Posterior vena cava (tissue), 2 donors: ENCODE measurements at regions of chr10 and their contacts with region 1.

Region 1: DNA sequence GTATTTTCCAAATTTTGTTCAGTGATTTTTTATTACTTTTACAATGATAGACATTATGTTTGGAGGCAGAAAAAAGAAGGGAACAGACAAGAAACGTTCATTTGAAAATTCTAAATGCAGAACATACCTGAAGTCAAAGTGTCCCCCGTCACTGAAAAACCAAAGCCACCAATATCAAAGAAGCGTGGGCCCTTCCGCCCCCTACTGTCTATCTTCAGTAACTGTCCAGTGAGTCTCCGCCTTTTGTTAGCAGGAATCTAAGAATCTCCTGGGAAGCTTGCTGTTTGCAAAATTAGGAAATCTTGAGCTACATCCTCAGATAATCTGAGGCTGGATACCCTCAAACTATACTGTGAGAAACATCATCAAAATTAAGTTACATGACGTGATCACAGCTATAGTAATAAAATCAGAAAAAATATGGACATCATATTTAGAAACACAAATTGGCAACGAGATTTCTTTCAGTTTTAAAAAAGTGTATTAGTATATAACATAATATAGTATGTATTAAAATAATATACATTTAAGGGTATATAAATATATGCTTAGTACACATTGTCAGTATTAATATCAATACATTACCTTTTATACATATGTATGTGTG is 169.3 kb upstream of the AKR1E2 start:
- DNase-seq: no peak

Region 2: DNA sequence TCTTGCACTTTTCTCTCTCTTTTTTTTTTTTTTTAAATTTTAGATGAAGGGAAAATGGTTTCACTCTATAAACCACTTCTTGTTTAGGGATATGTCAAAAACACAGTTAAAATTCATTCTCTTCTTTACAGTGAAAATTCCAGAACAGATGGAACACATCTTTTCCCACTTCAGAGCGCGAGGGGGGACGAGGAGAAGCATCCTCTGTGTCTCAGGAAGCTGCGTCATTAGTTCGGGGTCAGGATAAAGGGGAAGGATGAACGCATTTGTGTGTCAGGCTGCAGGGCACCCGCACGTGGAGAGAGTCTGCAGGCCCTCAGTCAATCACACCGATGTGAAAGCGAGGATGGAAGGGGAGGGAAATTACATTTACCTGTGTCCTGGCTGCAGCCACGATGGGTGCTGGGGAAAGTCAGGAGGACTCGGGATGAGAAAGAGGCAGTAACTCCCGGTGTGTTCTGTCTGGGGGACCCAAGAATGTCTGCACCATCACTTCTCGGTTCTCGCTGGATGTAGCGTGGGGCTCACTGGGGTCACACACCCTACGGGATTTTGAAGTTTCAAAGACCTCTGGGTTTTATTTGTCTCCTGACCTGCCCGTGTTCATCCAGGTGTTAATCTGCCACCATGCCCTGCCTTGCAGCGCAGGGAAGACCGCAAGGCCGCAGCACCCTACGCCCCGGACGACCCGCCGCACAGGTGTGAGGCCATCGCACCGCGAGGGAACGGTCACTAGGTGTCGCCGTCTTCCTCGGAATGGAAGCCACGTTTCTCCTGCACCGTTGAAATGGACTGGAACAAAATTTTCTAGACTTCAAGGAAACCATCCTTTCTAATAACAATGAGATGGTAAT is 1417.4 kb before region 1 on chr10:
- intact Hi-C with region 1: loop called in 1 of 2 experiments (anchors 10 kb)
- DNase-seq: peak; percentile 90

Region 3: GRCh38 chr10:3761021-3761686 is 895.5 kb before region 1 on chr10:
- intact Hi-C with region 1: loop called in 1 of 2 experiments (anchors 10 kb)
- DNase-seq: no peak

Region 4: GRCh38 chr10:4093438-4093837 is 563.2 kb before region 1 on chr10:
- intact Hi-C with region 1: loop called in 1 of 2 experiments (anchors 10 kb)
- DNase-seq: no peak

Region 5: GRCh38 chr10:4283846-4284610 is 372.7 kb before region 1 on chr10:
- intact Hi-C with region 1: loop called in 1 of 2 experiments (anchors 10 kb)
- DNase-seq: peak; percentile 91

Region 6: DNA sequence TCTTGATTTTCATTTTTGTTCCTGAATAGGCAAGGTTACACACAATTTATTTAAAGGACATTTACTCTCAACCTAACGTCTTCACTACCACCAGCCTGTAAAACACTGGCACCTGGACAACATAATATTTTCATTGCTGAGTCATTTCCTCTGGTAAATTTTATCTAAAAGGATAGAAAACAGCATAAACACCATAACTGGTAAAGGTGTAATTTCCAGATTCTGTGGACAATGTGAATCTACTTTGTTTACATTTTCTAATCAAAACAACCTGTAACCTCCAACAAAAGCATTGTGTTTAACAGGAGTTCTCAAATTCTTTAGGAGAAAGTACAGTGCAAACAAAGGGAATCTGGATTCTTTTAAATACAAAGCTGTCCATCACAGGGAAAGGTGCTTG is 302.7 kb before region 1 on chr10:
- intact Hi-C with region 1: loop called in 1 of 2 experiments (anchors 10 kb)
- DNase-seq: no peak

Region 7: DNA sequence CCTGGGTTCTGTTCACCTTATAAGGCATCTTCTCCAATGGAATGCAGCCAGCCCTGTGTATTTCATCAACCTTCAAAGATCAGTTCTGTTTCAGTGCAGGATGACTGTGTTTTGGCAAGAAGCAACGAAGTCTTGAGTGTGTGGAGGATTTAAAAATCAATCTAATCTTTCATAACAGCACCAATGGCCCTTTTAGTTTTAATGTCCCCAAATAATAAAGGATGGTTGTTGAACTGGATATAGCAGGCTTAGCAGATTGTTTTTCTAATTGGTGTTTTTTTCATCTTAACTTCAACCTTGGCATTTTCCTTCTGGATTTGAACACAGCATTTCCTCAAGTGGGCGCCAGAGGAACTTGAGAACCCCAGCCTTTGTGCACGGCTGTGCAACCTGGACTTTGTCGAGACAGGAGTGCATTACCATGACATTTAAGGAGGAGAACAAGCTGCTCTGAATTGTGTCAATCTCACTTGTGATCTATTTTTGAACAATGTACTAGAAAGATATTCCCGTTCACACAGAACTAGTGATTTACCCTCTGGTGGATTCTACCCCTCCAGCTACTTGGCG is 143.9 kb before region 1 on chr10:
- intact Hi-C with region 1: loop called in 1 of 2 experiments (anchors 10 kb)
- DNase-seq: no peak

Region 8: DNA sequence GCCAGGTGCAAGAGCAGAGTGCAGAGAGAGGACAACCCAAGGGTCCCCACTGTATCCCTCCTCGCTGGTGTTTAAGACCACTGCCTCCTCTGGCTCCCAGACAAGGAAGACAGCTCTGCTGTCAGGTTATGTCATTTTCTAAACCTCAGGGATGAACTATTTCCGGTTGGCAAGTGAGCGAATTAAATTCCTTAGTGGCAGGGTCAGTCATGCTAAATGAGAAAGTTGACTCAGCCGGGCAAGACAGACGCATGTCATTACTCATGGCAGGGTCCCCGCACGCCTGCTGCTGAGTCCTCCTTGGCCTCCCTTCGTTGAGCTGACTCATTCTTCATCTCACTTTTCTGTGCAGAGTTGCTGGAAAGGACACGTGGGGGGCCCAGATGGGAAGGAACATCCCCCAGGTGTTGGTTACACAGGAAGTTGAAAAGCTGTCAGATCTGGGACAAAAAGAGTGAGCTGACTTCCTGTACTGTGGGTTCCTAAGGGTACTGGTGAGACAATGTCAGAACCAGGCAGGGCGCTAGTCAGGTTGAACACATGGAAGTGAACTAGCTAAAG is 660.9 kb after region 1 on chr10:
- intact Hi-C with region 1: no loop called
- DNase-seq: no peak